WTC11 (cell line): ENCODE measurements at regions of chr16 and their contacts with region 1.

Region 1: GRCh38 chr16:49890876-49891275 is 35.0 kb upstream of the ZNF423 start:
- DNase-seq: peak; percentile 77
- ATAC-seq: peak; percentile 98
- H3K4me3 Mint-ChIP-seq: no peak overlapping the region
- H3K27ac Mint-ChIP-seq: no peak overlapping the region
- H3K4me1 Mint-ChIP-seq: no peaks in the 10 kb centered on the region; the same call in 1 of the 2 replicates
- H3K27me3 Mint-ChIP-seq: no peaks in the 10 kb centered on the region
- CTCF ChIP-seq: peak; percentile 44; the same call in 1 of the 2 replicates

Region 2: GRCh38 chr16:49821614-49822282 is 69.1 kb before region 1 on chr16:
- CTCF ChIA-PET with region 1: interaction called, 12 read pairs
- POLR2A ChIA-PET with region 1: no interaction called
- DNase-seq: no peak
- ATAC-seq: peak; percentile 71
- H3K4me3 Mint-ChIP-seq: no peak overlapping the region
- H3K27ac Mint-ChIP-seq: peak overlapping the region; percentile 85
- H3K4me1 Mint-ChIP-seq: peaks cover 55% of the 10 kb centered on the region
- H3K27me3 Mint-ChIP-seq: no peaks in the 10 kb centered on the region
- CTCF ChIP-seq: no peak

Region 3: DNA sequence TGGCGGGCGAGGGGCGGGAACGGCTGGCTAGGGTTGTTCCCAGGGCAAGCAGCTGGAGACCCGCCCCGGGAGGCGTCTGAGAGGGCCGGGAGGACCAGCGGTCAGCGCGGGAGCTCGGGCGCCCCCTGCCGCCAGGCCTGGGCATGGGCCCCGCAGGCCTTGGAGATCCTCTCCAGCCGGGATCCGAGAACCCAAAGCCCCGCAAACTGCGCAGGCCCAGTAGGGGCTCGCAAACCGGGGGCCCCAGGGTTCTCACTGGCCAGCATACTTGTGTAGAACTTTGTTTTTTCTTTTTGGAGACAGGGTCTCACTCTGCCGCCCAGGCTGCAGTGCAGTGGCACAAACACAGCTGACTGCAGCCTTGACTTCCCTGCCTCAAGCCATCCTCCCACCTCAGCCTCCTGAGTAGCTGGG is 14.2 kb before region 1 on chr16:
- CTCF ChIA-PET with region 1: interaction called, 52 read pairs
- POLR2A ChIA-PET with region 1: no interaction called
- DNase-seq: peak; percentile 88
- ATAC-seq: peak; percentile 89
- H3K4me3 Mint-ChIP-seq: peak overlapping the region; percentile 76
- H3K27ac Mint-ChIP-seq: no peak overlapping the region
- H3K4me1 Mint-ChIP-seq: peaks cover 4% of the 10 kb centered on the region
- H3K27me3 Mint-ChIP-seq: peaks cover 9% of the 10 kb centered on the region
- CTCF ChIP-seq: peak; percentile 95

Region 4: DNA sequence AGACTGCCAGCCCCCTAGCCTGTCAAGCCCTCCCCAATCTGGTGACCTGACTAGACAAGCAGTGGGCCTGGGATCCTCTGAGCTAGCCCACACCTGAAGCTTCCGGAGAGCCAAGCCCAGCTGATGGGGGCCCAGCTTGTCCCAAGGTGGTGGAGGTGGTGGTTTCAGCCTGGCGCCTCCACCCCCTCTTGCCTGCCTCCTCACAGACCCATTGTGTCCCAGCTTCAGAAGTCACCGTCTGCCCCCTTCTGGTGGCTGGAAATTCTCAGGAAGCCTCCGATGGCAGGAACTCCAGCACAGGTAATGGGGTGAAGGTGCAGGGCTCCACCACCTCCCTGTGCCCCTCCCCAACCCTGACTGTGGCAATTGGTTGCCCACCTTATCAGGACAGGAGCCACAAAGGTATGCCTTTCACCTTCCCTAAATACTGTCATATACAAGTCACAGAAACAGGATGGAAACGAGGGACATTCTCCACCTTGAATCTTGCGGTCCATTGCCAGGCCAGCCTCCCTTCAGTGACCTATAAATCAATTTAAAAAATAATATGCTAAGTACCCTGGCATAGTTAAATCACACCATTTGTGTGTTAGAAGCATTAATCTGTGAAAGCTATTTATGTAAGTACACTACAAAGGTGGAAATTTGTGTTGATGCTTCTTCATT is 31.0 kb after region 1 on chr16:
- CTCF ChIA-PET with region 1: interaction called, 17 read pairs
- POLR2A ChIA-PET with region 1: no interaction called
- DNase-seq: peak; percentile 87
- ATAC-seq: peak; percentile 92
- H3K4me3 Mint-ChIP-seq: no peak overlapping the region
- H3K27ac Mint-ChIP-seq: no peak overlapping the region
- H3K4me1 Mint-ChIP-seq: peaks cover 3% of the 10 kb centered on the region
- H3K27me3 Mint-ChIP-seq: no peaks in the 10 kb centered on the region
- CTCF ChIP-seq: peak; percentile 55; the same call in 1 of the 2 replicates

Region 5: GRCh38 chr16:49993579-49993978 is 102.7 kb after region 1 on chr16:
- CTCF ChIA-PET with region 1: no interaction called
- POLR2A ChIA-PET with region 1: no interaction called
- DNase-seq: no peak
- ATAC-seq: no peak
- H3K4me3 Mint-ChIP-seq: no peak overlapping the region
- H3K27ac Mint-ChIP-seq: no peak overlapping the region
- H3K4me1 Mint-ChIP-seq: no peaks in the 10 kb centered on the region
- H3K27me3 Mint-ChIP-seq: peaks cover 3% of the 10 kb centered on the region; the same call in 1 of the 2 replicates
- CTCF ChIP-seq: no peak